BJ (cell line): ENCODE measurements at regions of chr19 and their contacts with region 1.

Region 1: DNA sequence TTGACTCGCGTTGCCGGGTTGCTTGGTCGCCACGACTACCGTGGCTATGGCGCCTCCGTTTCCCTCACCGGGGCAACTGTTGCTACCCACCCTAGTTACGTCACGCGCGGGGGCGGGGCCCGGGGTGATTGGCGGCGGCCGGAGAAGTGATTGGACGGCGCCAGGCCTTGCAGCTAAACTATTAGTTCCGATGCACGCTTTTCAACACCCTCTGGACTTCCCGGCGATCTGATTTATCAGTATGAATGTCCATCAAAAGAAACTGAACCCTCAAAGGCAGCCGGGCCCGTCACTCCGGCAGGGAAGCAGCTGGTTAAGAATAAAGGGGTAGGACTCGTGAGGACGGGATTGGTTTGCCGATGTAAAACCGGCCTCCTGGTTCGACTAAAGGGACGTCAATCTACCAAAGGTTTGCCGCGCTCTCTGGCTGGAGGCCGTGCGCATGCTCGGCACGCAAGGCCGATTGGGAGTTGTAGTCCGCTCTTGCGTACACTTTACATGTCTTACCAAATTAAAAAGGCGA is at the start of gene RFX1:
- DNase-seq: peak; percentile 100
- H3K4me3 ChIP-seq: peak within 1 kb of the TSS; percentile 92
- H3K27me3 ChIP-seq: no peaks in the 10 kb centered on the region
- CTCF ChIP-seq: no peak
- polyA plus RNA-seq, gene RFX1: 0.37 and 0.78 TPM in 2 replicates

Region 2: GRCh38 chr19:13980297-13980707 is 26.0 kb before region 1 on chr19:
- CTCF ChIA-PET with region 1: no interaction called
- POLR2A ChIA-PET with region 1: no interaction called
- DNase-seq: no peak
- H3K4me3 ChIP-seq: no peak overlapping the region
- H3K27me3 ChIP-seq: no peaks in the 10 kb centered on the region
- CTCF ChIP-seq: no peak

Region 3: GRCh38 chr19:14023404-14024235 is 17.3 kb after region 1 on chr19:
- CTCF ChIA-PET with region 1: interaction called, 4 read pairs
- POLR2A ChIA-PET with region 1: interaction called, 11 read pairs
- DNase-seq: no peak
- H3K4me3 ChIP-seq: no peak overlapping the region
- H3K27me3 ChIP-seq: peaks cover 6% of the 10 kb centered on the region
- CTCF ChIP-seq: peak; percentile 32; the same call in 1 of the 2 replicates

Region 4: GRCh38 chr19:14066134-14066533 is 59.8 kb after region 1 on chr19:
- CTCF ChIA-PET with region 1: no interaction called
- POLR2A ChIA-PET with region 1: no interaction called
- DNase-seq: no peak
- H3K4me3 ChIP-seq: no peak overlapping the region
- H3K27me3 ChIP-seq: no peaks in the 10 kb centered on the region
- CTCF ChIP-seq: no peak